Motor neuron (in vitro differentiated cells): ENCODE measurements at regions of chr7 and their contacts with region 1.

Region 1: DNA sequence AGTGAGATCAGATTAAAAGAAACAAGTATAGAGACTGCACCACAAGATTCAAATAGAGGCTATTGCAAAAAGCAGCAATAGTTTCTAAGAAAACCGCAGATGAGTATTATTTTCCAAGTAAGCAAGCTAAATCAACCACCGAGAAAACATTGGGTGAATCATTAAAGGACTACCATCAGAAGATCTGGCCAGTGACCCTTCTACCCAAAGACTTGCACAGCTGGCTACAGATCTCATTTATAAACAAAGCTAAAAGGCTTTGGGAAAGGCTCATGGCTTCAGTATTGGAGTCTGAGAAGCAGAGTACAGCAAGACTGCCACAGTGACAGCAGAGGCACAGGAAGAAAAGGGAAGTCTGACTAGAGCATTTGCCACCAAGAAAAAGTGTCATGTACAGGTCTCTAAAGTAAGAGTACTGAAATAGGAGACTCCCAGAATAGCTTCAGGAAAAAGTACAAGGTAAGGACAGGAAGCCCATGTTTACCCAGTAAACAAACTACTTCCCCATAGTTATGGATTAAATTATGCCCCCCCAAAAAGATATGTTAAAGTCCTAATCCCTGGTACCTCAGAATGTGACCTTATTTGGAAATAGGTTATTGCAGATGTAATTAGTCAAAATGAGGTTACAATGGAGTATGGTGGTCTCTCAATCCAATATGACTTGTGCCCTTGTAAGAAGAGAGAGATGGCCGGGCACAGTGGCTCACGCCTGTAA is 19.0 kb downstream of the STEAP1 start:
- ATAC-seq: no peak
- H3K4me3 ChIP-seq: no peak overlapping the region
- H3K27ac ChIP-seq: no peak overlapping the region
- H3K4me1 ChIP-seq: no peaks in the 10 kb centered on the region

Region 2: DNA sequence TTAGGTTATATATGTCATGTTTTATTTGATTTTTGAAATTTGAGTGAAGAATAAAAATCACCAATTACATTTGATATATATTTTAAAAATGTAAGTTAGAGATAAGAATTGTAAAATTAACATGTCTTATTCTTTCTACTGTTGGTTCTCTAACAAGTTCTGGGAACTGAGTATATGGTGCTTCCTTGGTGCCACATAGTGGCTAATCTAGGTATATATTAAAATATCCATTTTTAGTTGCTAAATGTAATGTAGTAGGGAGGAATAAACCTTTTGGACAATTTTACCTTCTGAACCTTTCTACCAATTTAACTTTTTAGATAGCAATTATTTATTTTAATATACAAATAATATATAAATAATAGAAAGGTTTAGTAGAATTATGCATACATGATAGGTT is 89.2 kb after region 1 on chr7:
- in situ Hi-C with region 1: loop called in 2 of 9 experiments (anchors 25 kb)
- ATAC-seq: peak in 4 of 8 experiments; percentile 44 to 60 (median 53)
- H3K4me3 ChIP-seq: no peak overlapping the region
- H3K27ac ChIP-seq: no peak overlapping the region
- H3K4me1 ChIP-seq: no peaks in the 10 kb centered on the region

Region 3: GRCh38 chr7:90403174-90404113 is 230.2 kb after region 1 on chr7 and contains the start of gene CLDN12:
- in situ Hi-C with region 1: loop called in 1 of 9 experiments (anchors 25 kb)
- ATAC-seq: peak; percentile 91 to 97 (median 95)
- H3K4me3 ChIP-seq: peak within 1 kb of the TSS; percentile 54 to 60 (median 60)
- H3K27ac ChIP-seq: peak within 1 kb of the TSS; percentile 78 to 82
- H3K4me1 ChIP-seq: peaks cover 3 to 7% of the 10 kb centered on the region in 2 donors
- total RNA-seq, gene CLDN12: 28.4 to 55.1 (median 30.9) TPM

Region 4: GRCh38 chr7:90424720-90425119 is 251.4 kb after region 1 on chr7:
- in situ Hi-C with region 1: loop called in 3 of 9 experiments (anchors 25 kb)
- ATAC-seq: no peak
- H3K4me3 ChIP-seq: no peak overlapping the region
- H3K27ac ChIP-seq: no peak overlapping the region
- H3K4me1 ChIP-seq: no peaks in the 10 kb centered on the region